Activated CD4-positive, alpha-beta memory T cell treated with anti-CD3 and anti-CD28 coated beads for 36 hours (primary cell): ENCODE measurements at regions of chr19 and their contacts with region 1.

Region 1: DNA sequence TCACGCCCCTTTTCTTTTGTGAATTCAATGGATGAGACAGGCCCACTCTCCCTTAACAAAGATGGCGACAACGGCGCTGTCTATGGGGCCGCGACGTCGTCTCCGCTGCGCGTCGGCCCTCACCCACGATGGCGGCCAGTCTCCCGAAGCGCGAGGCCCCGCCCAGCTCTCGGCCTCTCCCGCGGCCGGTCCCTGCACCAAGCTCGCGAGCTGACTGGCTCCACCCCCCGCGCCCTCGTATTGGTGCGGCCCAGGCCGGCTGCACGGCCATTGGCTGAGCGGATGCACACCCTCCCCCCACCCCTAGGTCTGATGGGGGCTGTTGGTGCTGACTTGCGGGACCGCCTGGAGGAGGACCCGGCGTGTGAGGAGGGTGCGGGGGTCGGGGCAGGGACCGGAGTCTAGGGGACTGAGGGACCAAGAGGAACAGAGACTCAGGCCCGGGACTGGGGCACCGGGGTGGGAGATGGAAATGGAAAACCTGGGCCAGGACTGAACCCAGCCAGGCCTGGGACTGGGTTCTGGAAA is 4.8 kb downstream of the SPHK2 start:
- DNase-seq: peak; percentile 98
- H3K4me3 Mint-ChIP-seq: peak overlapping the region; percentile 75
- H3K27ac Mint-ChIP-seq: peak overlapping the region; percentile 89
- H3K4me1 Mint-ChIP-seq: peaks cover 51% of the 10 kb centered on the region
- H3K27me3 Mint-ChIP-seq: no peaks in the 10 kb centered on the region

Region 2: GRCh38 chr19:48637170-48637947 is 13.2 kb after region 1 on chr19 and contains the start of gene DBP:
- CTCF ChIA-PET with region 1: interaction called, 3 read pairs
- POLR2A ChIA-PET with region 1: interaction called, 10 read pairs
- intact Hi-C with region 1: loop called (anchors 1 kb)
- DNase-seq: peak; percentile 99
- H3K4me3 Mint-ChIP-seq: peak within 1 kb of the TSS; percentile 87
- H3K27ac Mint-ChIP-seq: peak within 1 kb of the TSS; percentile 98
- H3K4me1 Mint-ChIP-seq: peaks cover 48% of the 10 kb centered on the region
- H3K27me3 Mint-ChIP-seq: no peaks in the 10 kb centered on the region
- total RNA-seq, gene DBP: 8.3 to 10.4 TPM